ENCODE measurements at regions of chr1 and their contacts with region 1.

Region 1: GRCh38 chr1:51044834-51045233 is 57.2 kb upstream of the C1orf185 start:
- DNase-seq: no peak
- ATAC-seq: no peak
- H3K4me3 Mint-ChIP-seq: no peak overlapping the region
- H3K27ac Mint-ChIP-seq: no peak overlapping the region
- H3K4me1 Mint-ChIP-seq: no peaks in the 10 kb centered on the region
- H3K27me3 Mint-ChIP-seq: peaks cover 7% of the 10 kb centered on the region

Region 2: GRCh38 chr1:50873458-50874187 is 171.2 kb before region 1 on chr1:
- CTCF ChIA-PET with region 1: no interaction called
- POLR2A ChIA-PET with region 1: no interaction called
- intact Hi-C with region 1: loop called (anchors 2 kb)
- DNase-seq: peak; percentile 83
- ATAC-seq: peak; percentile 93
- H3K4me3 Mint-ChIP-seq: peak overlapping the region; percentile 42
- H3K27ac Mint-ChIP-seq: no peak overlapping the region
- H3K4me1 Mint-ChIP-seq: peaks cover 9% of the 10 kb centered on the region
- H3K27me3 Mint-ChIP-seq: no peaks in the 10 kb centered on the region

Region 3: GRCh38 chr1:51019811-51020210 is 25.0 kb before region 1 on chr1:
- CTCF ChIA-PET with region 1: no interaction called
- POLR2A ChIA-PET with region 1: no interaction called
- intact Hi-C with region 1: no loop called
- DNase-seq: no peak
- ATAC-seq: no peak
- H3K4me3 Mint-ChIP-seq: no peak overlapping the region
- H3K27ac Mint-ChIP-seq: no peak overlapping the region
- H3K4me1 Mint-ChIP-seq: no peaks in the 10 kb centered on the region
- H3K27me3 Mint-ChIP-seq: peaks cover 6% of the 10 kb centered on the region

Measured in activated CD4-positive, alpha-beta T cell treated with anti-CD3 and anti-CD28 coated beads for 36 hours (primary cell).